Activated naive CD4-positive, alpha-beta T cell treated with anti-CD3 and anti-CD28 coated beads for 36 hours (primary cell): ENCODE measurements at regions of chr4 and their contacts with region 1.

Region 1: DNA sequence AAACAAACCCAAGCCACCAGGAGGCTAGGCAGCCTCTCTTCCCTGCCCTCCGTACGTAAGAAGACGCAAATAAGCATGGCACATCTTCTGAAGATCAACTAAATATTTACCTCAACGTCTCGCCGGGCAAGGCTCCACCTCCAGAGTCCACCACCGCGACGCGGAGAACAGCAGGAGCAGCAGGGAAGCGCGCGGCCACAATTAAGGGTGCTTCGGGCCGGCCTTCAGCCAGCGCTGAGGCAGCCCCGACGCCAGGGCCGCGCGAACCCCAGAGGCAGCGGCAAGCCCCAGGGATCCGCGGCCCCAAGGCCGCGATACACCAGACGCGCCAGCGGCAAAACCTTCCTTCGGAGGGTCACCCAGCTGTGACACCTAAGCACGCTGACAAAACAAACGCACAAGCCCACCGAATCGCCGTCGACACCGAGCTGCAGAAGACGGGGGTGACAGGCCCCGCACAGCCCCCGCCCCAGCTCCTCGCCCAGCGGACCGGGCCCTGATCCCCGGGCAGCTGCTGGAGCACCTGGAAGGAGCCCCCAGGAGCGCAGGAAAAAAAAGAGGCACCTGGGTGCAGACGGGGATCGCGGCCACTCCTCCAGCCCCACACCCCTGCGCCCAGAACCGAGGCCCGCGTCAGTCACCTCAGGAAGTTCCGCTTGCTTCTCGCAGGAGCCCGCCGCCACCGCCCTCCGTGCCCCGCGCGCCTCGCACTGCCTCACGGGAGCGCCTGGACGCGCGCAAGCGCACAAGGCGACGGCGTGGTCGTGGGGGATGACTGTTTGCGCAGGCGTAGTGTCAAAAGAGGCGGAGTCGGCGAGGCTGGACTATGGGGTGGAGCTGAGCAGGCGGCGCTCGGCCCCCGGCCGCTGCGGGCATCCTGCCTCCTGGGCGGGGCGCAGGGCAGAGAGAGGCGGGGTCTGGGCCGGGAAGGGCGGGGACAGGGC is at the starts of genes HAUS3 and POLN:
- DNase-seq: peak; percentile 99
- H3K4me3 Mint-ChIP-seq: peak within 1 kb of the TSS; percentile 87
- H3K27ac Mint-ChIP-seq: peak within 1 kb of the TSS; percentile 84
- H3K4me1 Mint-ChIP-seq: peaks cover 52% of the 10 kb centered on the region
- H3K27me3 Mint-ChIP-seq: no peaks in the 10 kb centered on the region
- total RNA-seq, gene HAUS3: 18.0 to 18.1 TPM
- total RNA-seq, gene POLN: 0.91 to 1.3 TPM

Region 2: GRCh38 chr4:1712216-1713002 is 529.3 kb before region 1 on chr4 and contains the start of gene SLBP:
- CTCF ChIA-PET with region 1: no interaction called
- intact Hi-C with region 1: loop called (anchors 5 kb)
- DNase-seq: peak; percentile 99
- H3K4me3 Mint-ChIP-seq: peak within 1 kb of the TSS; percentile 98
- H3K27ac Mint-ChIP-seq: peak within 1 kb of the TSS; percentile 94
- H3K4me1 Mint-ChIP-seq: peaks cover 68% of the 10 kb centered on the region
- H3K27me3 Mint-ChIP-seq: no peaks in the 10 kb centered on the region
- total RNA-seq, gene SLBP: 75.4 to 77.1 TPM

Region 3: GRCh38 chr4:2220016-2220630 is 21.6 kb before region 1 on chr4:
- CTCF ChIA-PET with region 1: interaction called, 11 read pairs
- intact Hi-C with region 1: loop called (anchors 1 kb)
- DNase-seq: peak; percentile 90
- H3K4me3 Mint-ChIP-seq: no peak overlapping the region
- H3K27ac Mint-ChIP-seq: no peak overlapping the region
- H3K4me1 Mint-ChIP-seq: no peaks in the 10 kb centered on the region
- H3K27me3 Mint-ChIP-seq: no peaks in the 10 kb centered on the region

Region 4: DNA sequence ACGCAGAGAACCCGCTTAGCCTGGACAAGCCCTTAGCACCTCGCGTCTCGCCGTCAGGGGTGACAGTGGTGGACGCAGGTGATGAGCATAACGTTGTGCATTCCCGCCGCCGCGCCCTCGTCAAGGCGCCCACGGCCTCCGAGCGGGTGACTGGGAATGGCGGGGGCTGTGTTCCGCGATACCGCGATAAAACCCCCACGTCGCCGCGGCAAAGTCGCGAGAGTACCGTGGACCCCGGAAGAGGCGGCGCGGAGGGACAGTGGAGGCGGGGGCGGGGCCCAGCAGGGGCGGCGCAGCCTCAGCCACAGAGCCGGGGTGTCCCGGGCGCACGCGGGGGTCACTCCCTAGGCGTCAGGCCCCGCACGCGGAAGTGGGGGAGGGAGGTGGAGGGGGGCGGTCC is 123.0 kb after region 1 on chr4:
- CTCF ChIA-PET with region 1: no interaction called
- intact Hi-C with region 1: loop called (anchors 5 kb)
- DNase-seq: peak; percentile 72
- H3K4me3 Mint-ChIP-seq: peak overlapping the region; percentile 70
- H3K27ac Mint-ChIP-seq: peak overlapping the region; percentile 24
- H3K4me1 Mint-ChIP-seq: peaks cover 9% of the 10 kb centered on the region
- H3K27me3 Mint-ChIP-seq: no peaks in the 10 kb centered on the region

Region 5: DNA sequence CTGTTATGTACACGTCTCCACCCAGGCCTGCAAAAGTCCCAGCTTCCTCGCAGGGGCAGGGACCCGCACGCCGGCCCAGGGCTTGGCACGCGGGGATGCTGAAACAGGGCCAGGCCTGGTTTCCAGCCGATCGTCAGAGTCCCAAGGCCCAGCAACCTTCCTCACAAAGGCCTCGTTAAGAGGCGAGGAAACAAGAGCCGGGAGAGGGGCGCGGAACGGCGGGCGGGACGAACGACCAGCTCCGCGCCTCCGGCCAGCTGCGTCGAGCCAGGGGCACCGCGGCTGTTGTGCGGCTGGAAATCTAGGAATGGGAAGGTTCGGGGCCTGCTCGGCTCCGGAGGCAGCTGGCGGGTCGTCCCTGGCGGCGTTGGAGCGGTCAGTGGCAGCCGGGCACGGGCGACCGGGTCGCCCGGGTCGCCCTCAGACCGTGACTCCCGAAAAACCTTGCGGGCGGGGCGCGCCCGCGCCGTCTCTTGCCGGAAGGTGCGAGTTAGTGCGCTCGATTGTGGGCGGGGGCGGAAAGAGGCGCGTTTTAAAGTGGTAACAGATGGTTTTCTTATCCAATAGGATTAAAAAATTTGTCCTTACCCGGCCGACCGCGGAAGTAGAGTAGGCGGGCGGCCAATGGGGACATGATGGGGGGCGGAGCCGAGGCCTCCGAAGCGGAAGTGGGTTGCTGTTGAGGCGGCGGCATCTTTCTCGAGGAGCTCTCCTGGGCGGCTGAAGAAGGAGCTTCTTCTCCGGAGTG is 226.9 kb after region 1 on chr4 and contains the start of gene RNF4:
- CTCF ChIA-PET with region 1: no interaction called
- intact Hi-C with region 1: loop called (anchors 1 kb)
- DNase-seq: peak; percentile 98
- H3K4me3 Mint-ChIP-seq: peak within 1 kb of the TSS; percentile 97
- H3K27ac Mint-ChIP-seq: peak within 1 kb of the TSS; percentile 98
- H3K4me1 Mint-ChIP-seq: peaks cover 47% of the 10 kb centered on the region
- H3K27me3 Mint-ChIP-seq: no peaks in the 10 kb centered on the region
- total RNA-seq, gene RNF4: 69.2 to 73.1 TPM

Region 6: DNA sequence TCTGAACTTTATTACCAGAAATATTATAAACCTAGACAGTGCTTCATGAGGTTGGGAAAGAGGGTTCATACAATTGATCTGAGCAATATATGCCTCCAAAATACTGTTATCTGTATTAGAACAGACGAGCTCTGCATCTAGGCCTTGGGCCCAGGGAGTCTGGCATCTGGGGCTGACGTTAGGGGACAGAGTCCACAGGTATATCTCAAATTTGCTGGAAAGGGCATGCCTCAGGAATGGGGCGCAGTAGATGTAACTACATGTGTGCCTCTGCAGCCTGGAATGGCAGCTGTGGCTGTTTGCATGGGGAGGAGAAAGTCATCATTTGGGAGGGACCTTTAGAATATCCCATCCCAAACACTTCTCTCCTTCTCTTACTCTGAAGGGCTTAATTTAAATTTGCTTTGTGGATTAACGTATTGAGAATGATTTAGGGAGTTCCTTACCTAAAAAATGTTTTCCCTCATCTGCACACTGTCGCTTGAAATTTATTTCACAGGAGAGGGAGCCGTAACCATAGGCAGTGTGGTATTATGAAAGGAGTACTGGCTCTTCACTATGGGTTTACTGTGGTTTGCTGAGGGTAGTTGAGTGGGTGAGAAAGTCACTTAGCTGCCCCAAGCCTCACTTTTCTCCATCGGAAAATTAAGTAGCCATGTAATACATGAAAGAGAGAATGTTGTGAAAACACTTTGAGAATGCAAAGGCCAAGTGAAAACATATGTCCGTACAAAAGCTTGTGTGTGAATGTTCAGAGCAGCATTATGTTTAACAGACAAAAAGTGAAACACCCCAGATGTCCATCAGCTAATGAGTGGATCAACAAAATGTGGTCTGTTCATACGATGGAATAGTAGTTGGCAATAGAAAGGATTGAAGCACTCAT is 607.8 kb after region 1 on chr4:
- CTCF ChIA-PET with region 1: no interaction called
- intact Hi-C with region 1: loop called (anchors 5 kb)
- DNase-seq: no peak
- H3K4me3 Mint-ChIP-seq: no peak overlapping the region
- H3K27ac Mint-ChIP-seq: peak overlapping the region; percentile 30
- H3K4me1 Mint-ChIP-seq: peaks cover 89% of the 10 kb centered on the region
- H3K27me3 Mint-ChIP-seq: no peaks in the 10 kb centered on the region